Caco-2 (cell line): ENCODE measurements at regions of chr3 and their contacts with region 1.

Region 1: DNA sequence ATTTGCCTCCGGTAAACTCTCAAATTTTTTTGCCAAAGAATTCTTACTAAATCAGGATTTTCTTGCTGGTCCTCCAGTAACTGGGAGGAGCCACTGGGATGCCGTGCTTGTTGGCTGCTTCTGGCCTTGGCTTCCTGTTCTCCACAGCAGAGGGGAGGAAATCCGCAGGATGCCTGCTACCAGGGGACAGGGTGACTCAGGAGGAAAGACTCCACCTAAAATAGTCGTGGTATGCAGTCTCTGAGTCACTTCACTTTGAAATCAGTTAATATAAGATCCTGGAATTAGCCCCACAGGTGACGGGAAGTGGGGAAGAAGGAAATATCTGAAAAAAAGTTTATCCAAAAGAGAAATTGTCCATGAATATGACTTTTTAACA is 6.5 kb upstream of the TM4SF18 start:
- DNase-seq: peak; percentile 74 to 90
- H3K4me3 ChIP-seq: no peak overlapping the region
- H3K4me3 Mint-ChIP-seq: peak overlapping the region; percentile 30
- H3K27ac Mint-ChIP-seq: peak overlapping the region; percentile 74
- H3K4me1 ChIP-seq: peaks cover 31% of the 10 kb centered on the region
- H3K4me1 Mint-ChIP-seq: peaks cover 19% of the 10 kb centered on the region
- H3K27me3 ChIP-seq: no peaks in the 10 kb centered on the region
- H3K27me3 Mint-ChIP-seq: no peaks in the 10 kb centered on the region
- CTCF ChIP-seq: no peak

Region 2: GRCh38 chr3:149299938-149300791 is 39.8 kb before region 1 on chr3:
- CTCF ChIA-PET with region 1: no interaction called
- POLR2A ChIA-PET with region 1: no interaction called
- intact Hi-C with region 1: loop called (anchors 1 kb)
- DNase-seq: peak; percentile 81 to 88
- H3K4me3 ChIP-seq: no peak overlapping the region
- H3K4me3 Mint-ChIP-seq: peak overlapping the region; percentile 49
- H3K27ac Mint-ChIP-seq: peak overlapping the region; percentile 61
- H3K4me1 ChIP-seq: peaks cover 35% of the 10 kb centered on the region
- H3K4me1 Mint-ChIP-seq: peaks cover 16% of the 10 kb centered on the region
- H3K27me3 ChIP-seq: no peaks in the 10 kb centered on the region
- H3K27me3 Mint-ChIP-seq: no peaks in the 10 kb centered on the region
- CTCF ChIP-seq: no peak

Region 3: DNA sequence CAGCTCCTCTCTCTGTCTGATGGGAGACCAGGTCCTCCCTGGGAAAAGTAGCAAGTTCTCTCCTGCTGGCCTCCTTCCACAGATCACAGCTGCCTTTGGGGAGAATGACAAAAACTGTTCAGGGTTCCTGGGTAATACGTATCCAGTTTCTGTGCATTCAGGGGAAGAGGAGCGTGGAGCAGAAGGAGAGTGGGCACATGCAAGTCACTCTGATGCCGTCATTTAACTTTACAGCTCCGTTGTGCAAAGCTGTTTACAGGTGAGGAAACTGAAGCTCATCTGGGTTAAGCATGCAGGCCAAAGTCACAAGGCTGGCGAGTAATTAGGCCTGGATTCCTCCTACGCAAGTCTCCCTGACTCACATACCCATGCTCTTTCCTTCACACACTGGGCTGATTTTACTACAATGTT is 45.0 kb after region 1 on chr3:
- CTCF ChIA-PET with region 1: no interaction called
- POLR2A ChIA-PET with region 1: no interaction called
- intact Hi-C with region 1: loop called (anchors 2 kb)
- DNase-seq: peak in 1 of 2 experiments; percentile 53
- H3K4me3 ChIP-seq: no peak overlapping the region
- H3K4me3 Mint-ChIP-seq: peak overlapping the region; percentile 57
- H3K27ac Mint-ChIP-seq: peak overlapping the region; percentile 95
- H3K4me1 ChIP-seq: peaks cover 81% of the 10 kb centered on the region
- H3K4me1 Mint-ChIP-seq: peaks cover 60% of the 10 kb centered on the region
- H3K27me3 ChIP-seq: no peaks in the 10 kb centered on the region
- H3K27me3 Mint-ChIP-seq: no peaks in the 10 kb centered on the region
- CTCF ChIP-seq: no peak

Region 4: DNA sequence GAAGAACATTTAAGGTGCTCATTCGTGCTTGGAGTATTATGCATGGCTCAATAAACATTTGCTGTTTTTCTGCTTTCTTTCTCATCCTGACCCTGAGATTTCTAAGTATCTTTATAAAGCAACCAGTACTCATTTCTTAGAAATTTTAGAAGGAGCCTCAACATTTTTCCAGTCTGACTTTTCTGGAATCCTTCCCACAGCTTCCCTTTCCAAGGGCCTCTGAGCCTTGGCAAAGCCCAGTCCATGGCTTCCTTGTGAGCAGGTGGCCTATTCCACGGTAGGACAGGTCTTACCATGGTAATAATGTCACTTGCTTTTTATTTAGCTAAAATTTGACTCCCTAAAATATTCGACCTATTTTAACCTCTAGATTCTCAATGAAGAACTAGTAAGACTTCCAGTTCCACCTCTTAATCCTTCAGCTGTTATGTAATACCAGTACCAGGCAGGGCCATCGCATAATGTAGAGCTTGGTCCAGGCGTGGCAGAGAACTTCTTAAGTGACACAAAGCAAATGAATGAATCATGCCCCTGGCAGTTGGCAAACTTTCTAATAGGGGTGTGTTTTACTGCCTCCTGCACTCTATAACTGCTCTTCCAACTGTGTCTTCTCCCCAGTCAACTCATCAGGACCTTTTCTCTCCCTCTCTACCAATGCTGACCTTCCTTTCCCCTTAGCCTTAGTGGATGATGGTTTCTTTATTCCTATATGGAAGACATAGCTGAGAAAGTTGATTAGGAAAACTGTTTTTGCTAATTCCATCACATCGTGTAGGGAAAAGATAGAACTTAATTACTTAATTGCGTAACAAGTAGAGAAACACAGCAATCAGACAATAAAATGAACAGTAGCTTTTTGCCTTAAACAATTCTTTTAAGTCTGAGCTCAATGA is 133.7 kb after region 1 on chr3:
- CTCF ChIA-PET with region 1: no interaction called
- POLR2A ChIA-PET with region 1: no interaction called
- intact Hi-C with region 1: no loop called
- DNase-seq: peak in 1 of 2 experiments; percentile 66
- H3K4me3 ChIP-seq: no peak overlapping the region
- H3K4me3 Mint-ChIP-seq: no peak overlapping the region
- H3K27ac Mint-ChIP-seq: peak overlapping the region; percentile 30
- H3K4me1 ChIP-seq: peaks cover 23% of the 10 kb centered on the region
- H3K4me1 Mint-ChIP-seq: peaks cover 20% of the 10 kb centered on the region
- H3K27me3 ChIP-seq: no peaks in the 10 kb centered on the region
- H3K27me3 Mint-ChIP-seq: no peaks in the 10 kb centered on the region
- CTCF ChIP-seq: no peak